ENCODE measurements at regions of chr12 and their contacts with region 1.

Region 1: DNA sequence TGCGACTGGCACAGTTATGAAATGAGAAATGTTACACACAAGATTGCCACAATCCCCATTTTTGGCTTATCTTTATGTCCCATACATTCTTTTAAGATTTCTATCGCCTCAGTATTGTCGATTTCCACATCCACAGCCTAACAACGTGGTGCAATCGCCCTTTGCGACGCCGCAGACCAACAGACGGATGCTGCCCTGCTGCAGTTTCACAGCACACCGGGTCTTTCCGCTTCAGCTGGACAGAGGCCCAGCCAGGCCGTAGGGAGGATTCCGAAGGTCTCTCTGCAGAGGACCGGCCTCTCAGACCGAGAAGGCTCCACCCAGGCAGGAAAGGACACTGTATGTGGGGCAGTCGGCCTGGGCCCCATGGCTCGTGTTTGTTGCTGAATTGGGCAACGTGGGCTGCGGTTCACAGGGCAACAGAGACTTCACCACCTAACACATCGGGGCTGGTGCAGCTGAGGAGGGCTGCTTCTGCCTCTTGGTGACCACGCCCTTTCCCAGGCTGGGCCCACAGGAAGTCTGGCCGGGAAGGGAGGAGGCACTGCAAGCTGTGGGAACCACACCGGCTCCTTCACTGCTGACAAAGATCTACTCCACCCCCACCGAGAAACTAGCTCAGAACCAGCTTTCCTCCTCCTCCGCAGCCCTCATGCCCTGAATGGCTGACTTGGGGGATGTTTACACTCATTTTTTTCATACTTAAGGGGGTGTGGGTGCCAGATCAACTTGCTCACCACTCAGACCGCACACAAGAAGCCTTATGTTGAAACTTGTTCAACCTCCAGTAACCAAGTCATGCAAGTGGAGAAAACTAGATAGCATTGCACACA is 32.9 kb upstream of the MDM1 start:
- DNase-seq: peak; percentile 91
- ATAC-seq: peak; percentile 92
- H3K4me3 Mint-ChIP-seq: peak overlapping the region; percentile 74
- H3K27ac Mint-ChIP-seq: peak overlapping the region; percentile 96
- H3K4me1 Mint-ChIP-seq: peaks cover 64% of the 10 kb centered on the region
- H3K27me3 Mint-ChIP-seq: no peaks in the 10 kb centered on the region

Region 2: DNA sequence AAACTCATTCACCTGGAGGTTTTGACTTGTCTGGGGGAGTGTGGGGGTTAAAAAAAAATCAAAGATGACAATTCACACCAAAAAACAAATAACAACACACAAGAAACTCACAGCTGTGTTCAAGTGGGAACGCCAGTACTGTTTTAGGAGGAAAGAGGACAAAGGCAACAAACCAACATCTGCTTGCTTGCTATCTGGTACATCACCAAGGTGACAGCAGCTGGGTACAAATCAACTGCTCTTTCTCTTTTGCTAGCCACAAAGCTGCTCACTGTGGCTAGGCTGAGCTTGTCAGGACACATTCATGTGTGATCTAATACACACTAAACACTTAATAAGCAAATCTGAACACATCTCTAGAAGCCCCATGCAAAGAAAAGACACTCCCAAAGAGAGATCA is 117.6 kb after region 1 on chr12:
- CTCF ChIA-PET with region 1: interaction called, 3 read pairs
- POLR2A ChIA-PET with region 1: interaction called, 3 read pairs
- intact Hi-C with region 1: loop called in 1 of 2 experiments (anchors 2 kb)
- DNase-seq: peak; percentile 26
- ATAC-seq: peak; percentile 8
- H3K4me3 Mint-ChIP-seq: no peak overlapping the region
- H3K27ac Mint-ChIP-seq: peak overlapping the region; percentile 66
- H3K4me1 Mint-ChIP-seq: peaks cover 40% of the 10 kb centered on the region
- H3K27me3 Mint-ChIP-seq: no peaks in the 10 kb centered on the region

Region 3: GRCh38 chr12:68641138-68641537 is 276.0 kb after region 1 on chr12:
- CTCF ChIA-PET with region 1: no interaction called
- POLR2A ChIA-PET with region 1: no interaction called
- intact Hi-C with region 1: loop called in 1 of 2 experiments (anchors 1 kb)
- DNase-seq: peak; percentile 71
- ATAC-seq: peak; percentile 97
- H3K4me3 Mint-ChIP-seq: peak overlapping the region; percentile 46
- H3K27ac Mint-ChIP-seq: peak overlapping the region; percentile 75
- H3K4me1 Mint-ChIP-seq: peaks cover 84% of the 10 kb centered on the region
- H3K27me3 Mint-ChIP-seq: no peaks in the 10 kb centered on the region

Region 4: DNA sequence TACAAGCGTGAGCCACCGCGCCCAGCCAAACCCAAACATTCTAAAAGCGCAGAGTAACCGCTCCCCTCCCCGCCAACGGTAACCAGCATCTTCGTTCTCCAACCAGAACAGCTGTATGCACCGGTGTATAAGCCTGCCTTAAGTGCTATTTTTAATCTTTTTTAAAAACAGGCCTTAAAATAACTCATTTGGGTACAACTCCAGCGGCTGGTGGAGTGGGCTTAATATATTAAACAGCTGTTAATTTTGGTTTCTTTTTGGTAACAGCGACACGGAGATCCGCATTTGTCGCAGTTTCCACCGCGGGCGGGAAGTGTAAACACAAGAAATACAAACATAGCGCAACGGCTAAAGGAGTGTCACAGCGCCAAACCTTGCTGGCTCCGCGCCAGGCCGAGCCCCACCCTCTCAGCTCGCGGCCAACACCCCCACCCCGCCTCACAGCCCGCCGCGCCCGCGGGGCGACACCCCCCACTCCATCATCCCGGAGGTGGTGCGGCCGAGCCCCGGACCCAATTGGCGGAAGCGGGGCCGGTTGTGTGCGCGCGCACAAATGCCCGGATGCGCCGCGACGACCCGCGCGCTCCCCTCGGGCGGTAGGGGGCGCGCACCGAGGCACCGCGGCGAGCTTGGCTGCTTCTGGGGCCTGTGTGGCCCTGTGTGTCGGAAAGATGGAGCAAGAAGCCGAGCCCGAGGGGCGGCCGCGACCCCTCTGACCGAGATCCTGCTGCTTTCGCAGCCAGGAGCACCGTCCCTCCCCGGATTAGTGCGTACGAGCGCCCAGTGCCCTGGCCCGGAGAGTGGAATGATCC is 442.7 kb after region 1 on chr12 and contains the start of gene MDM2:
- CTCF ChIA-PET with region 1: no interaction called
- POLR2A ChIA-PET with region 1: no interaction called
- intact Hi-C with region 1: loop called in 1 of 2 experiments (anchors 1 kb)
- DNase-seq: peak; percentile 96
- ATAC-seq: peak; percentile 89
- H3K4me3 Mint-ChIP-seq: peak within 1 kb of the TSS; percentile 88
- H3K27ac Mint-ChIP-seq: peak within 1 kb of the TSS; percentile 99
- H3K4me1 Mint-ChIP-seq: peaks cover 34% of the 10 kb centered on the region
- H3K27me3 Mint-ChIP-seq: no peaks in the 10 kb centered on the region
- total RNA-seq, gene MDM2: 114 to 119 TPM

Measured in activated CD4-positive, alpha-beta T cell treated with anti-CD3 and anti-CD28 coated beads for 36 hours (primary cell).